Lower leg skin (tissue), 4 donors: ENCODE measurements at regions of chr3 and their contacts with region 1.

Region 1: DNA sequence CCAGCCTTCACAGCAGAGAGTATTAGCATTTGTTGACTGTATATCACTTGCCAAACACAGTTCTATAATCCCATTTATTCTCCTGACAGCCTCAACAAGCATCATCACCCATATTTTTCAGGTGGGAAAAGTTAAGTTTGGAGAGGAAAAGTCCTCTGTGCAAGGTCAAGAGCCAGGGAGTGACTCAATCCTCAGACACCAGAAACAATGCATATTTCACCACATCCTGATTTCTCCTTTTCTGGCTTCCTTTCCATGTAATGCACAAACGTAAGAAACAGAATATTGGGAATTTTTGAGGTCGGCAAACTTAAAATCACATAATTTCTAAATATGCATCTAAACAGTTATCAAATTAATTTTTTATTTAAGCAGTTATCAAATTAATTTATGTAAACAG is 116.0 kb upstream of the GADL1 start:
- DNase-seq: no peak
- H3K4me3 ChIP-seq: no peak overlapping the region
- CTCF ChIP-seq: no peak
- POLR2A ChIP-seq: no peak

Region 2: GRCh38 chr3:30977592-30977991 is 32.9 kb before region 1 on chr3:
- intact Hi-C with region 1: loop called (anchors 1 kb)
- DNase-seq: no peak
- H3K4me3 ChIP-seq: no peak overlapping the region
- CTCF ChIP-seq: no peak
- POLR2A ChIP-seq: no peak